ENCODE measurements at regions of chr10 and their contacts with region 1.

Region 1: DNA sequence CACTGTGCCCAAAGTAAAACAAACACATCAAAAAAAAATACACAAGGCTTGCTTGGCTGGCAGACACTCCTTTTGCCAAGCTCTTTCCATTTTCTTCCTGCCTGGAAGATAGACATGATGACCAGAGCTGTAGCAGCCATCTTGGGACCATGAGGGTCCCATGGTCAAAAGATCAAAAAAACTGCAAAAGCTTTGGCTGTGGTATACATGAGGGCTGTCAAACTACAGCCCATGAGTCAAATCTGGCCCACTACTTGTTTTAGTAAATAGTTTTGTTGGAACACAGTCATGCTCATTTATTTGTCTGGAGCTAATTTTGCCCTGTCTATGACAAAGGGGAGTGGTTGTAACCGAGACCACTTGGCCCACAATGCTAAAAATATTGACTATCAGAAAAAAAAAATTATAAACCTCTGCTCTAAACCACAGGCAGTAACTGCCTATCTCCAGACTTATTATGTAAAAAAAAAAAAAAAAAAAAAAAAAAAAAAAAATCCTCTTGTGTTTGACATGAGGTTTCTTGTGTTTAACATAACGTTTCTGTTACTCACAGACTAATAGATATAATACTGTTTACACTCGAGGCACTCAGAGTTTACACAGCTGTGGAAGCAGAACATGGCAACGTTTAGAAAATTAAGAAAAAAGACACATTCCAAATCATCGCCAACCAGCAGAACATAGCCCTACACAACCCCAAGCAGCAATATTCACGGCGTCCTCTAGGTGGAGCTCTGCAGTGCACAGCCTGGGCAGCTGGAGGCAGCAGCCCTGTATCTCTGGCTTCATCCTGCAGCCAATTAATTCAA is 36.9 kb downstream of the ASB13 start:
- H3K4me3 ChIP-seq: no peak overlapping the region
- H3K27ac ChIP-seq: no peak overlapping the region
- H3K4me1 ChIP-seq: no peaks in the 10 kb centered on the region
- CTCF ChIP-seq: no peak

Region 2: DNA sequence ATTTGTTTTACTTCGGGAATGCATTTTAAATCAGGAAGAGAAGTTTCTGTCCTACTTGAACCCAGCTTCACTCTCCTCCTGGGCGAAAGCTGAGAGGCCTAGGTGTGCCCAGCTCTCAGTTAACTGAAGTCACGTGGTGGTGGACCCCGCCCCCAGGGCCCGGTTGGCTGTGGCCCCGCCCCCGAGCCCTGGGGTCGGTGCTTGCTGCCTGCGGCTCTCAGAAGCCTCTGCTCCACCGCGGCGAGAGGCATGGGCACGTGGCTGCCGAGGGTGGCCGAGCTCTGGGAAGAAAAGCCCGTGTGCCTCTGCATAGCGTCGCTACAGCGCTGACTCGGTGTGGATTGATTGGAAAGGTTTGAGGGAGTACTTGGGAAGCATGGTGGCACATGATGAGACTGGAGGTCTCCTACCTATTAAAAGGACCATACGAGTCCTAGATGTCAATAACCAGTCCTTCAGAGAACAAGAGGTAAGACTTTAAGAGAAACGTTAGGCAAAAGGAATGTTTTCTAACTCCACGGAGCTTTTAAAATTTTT is 183.0 kb before region 1 on chr10:
- CTCF ChIA-PET with region 1: interaction called, 207 read pairs
- POLR2A ChIA-PET with region 1: interaction called, 4 read pairs
- H3K4me3 ChIP-seq: peak overlapping the region; percentile 42
- H3K27ac ChIP-seq: peak overlapping the region; percentile 11; the same call in 1 of the 2 replicates
- H3K4me1 ChIP-seq: peaks cover 18% of the 10 kb centered on the region; the same call in 1 of the 2 replicates
- CTCF ChIP-seq: no peak

Region 3: GRCh38 chr10:5643346-5644067 is 14.0 kb after region 1 on chr10:
- CTCF ChIA-PET with region 1: interaction called, 30 read pairs
- POLR2A ChIA-PET with region 1: no interaction called
- H3K4me3 ChIP-seq: no peak overlapping the region
- H3K27ac ChIP-seq: no peak overlapping the region
- H3K4me1 ChIP-seq: no peaks in the 10 kb centered on the region
- CTCF ChIP-seq: no peak

Region 4: GRCh38 chr10:5666008-5666829 is 36.7 kb after region 1 on chr10 and contains the start of gene ASB13:
- CTCF ChIA-PET with region 1: interaction called, 13 read pairs
- POLR2A ChIA-PET with region 1: no interaction called
- H3K4me3 ChIP-seq: peak within 1 kb of the TSS; percentile 78
- H3K27ac ChIP-seq: peak within 1 kb of the TSS; percentile 65; the same call in 1 of the 2 replicates
- H3K4me1 ChIP-seq: peaks cover 22% of the 10 kb centered on the region
- CTCF ChIP-seq: 0 out of 2 replicates have a peak, but pooled peaks have one; percentile 59

Region 5: GRCh38 chr10:5915451-5915850 is 285.9 kb after region 1 on chr10:
- CTCF ChIA-PET with region 1: no interaction called
- POLR2A ChIA-PET with region 1: no interaction called
- H3K4me3 ChIP-seq: no peak overlapping the region
- H3K27ac ChIP-seq: no peak overlapping the region
- H3K4me1 ChIP-seq: no peaks in the 10 kb centered on the region
- CTCF ChIP-seq: no peak